Astrocyte of the cerebellum (primary cell): ENCODE measurements at regions of chr17 and their contacts with region 1.

Region 1: GRCh38 chr17:58238139-58238634 is at the start of gene LPO:
- DNase-seq: no peak
- H3K4me3 ChIP-seq: no peak within 1 kb of the TSS
- CTCF ChIP-seq: no peak

Region 2: GRCh38 chr17:58172369-58173071 is 65.7 kb before region 1 on chr17:
- in situ Hi-C with region 1: loop called (anchors 5 kb)
- DNase-seq: no peak
- H3K4me3 ChIP-seq: no peak overlapping the region
- CTCF ChIP-seq: peak; percentile 50

Region 3: DNA sequence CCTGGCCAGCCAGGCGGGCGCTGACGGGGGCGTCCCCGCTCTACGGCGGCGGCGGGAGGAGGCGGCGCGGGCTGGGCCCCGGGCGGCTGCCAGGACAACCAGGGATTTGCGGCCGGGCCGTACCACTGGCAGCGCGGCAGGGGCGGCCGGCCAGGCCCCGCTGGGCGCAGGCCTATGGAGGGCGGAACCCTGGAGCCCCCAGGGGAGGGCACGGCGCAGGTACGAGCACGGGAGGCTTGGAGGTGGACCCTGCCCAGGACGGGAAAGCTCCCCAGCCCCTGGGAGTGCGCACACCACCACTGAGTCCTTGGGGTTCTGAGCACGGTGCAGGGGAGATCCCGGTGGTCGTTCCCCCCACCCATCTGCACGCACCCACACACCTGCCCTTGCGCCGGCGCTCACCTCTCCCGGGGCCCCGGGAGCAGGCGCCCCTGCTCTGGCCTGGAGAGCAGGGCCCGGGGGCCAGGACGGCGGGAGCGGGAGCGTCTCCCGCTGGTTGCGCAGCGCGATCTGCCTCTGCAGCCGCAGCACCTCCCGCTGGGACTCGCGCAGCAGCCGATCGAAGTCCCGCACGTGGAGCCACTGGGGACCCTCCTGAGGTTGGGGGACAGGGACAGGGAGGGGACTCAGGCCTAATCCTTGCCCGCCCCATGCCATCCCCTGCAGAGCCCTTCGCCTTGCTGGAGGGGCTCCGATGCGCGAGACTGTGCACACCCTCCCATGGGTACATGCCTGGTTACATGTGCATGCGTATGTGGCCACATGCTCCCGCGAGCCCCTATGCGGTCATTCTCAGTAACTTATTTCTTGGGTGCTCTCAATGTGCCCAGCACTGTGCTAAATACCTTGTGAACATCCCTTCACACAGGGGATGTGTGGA is 86.5 kb after region 1 on chr17:
- in situ Hi-C with region 1: no loop called
- DNase-seq: no peak
- H3K4me3 ChIP-seq: peak overlapping the region; percentile 36
- CTCF ChIP-seq: no peak